GM12878 (cell line): ENCODE measurements at regions of chr12 and their contacts with region 1.

Region 1: GRCh38 chr12:121483949-121484348 is 84.0 kb downstream of the RNF34 start:
- DNase-seq: no peak
- ATAC-seq: no peak
- H3K4me3 ChIP-seq: no peak overlapping the region
- H3K27ac ChIP-seq: no peak overlapping the region
- H3K4me1 ChIP-seq: no peaks in the 10 kb centered on the region
- H3K27me3 ChIP-seq: no peaks in the 10 kb centered on the region
- CTCF ChIP-seq: no peak
- EP300 ChIP-seq: no peak
- POLR2A ChIP-seq: no peak
- RAD21 ChIP-seq: no peak

Region 2: DNA sequence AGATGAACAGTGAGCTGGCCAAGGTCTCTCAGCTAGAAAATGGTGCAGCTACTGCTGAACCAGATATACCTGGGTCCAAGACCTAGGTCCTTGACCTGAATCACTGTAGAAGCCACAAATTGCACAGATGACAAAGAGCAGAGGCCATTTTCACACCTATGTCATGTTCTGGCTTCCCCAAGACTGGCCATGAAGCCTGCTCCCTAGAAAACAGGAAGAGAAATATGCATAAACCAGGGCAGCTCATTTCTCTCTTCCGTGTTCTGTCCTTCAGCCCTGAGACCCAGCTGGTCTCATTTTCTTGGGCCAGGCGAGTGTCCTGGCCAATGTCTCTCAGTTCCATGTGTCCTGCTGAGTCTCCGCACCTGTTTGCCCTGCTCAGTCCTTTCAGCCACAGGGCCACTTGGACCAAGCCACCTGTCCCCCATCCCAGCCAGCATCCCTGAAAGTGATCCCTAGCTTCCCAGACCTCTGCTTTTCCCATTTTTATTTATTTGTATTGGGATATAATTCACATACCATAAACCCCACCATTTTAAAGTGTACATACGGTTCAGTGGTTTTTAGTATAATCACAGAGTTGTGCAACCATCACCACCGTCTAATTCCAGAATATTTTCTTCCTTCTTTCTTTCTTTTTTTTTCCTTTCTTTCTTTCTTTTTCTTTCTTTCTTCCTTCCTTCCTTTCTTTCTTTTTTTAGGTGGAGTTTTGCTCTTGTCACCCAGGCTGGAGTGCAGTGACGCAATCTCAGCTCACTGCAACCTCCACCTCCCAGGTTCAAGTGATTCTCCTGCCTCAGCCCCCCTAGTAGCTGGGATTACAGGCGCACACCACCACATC is 324.3 kb before region 1 on chr12:
- CTCF ChIA-PET with region 1: no interaction called
- POLR2A ChIA-PET with region 1: no interaction called
- RAD21 ChIA-PET with region 1: no interaction called
- SMC1A ChIA-PET with region 1: no interaction called
- in situ Hi-C with region 1: no loop called
- intact Hi-C with region 1: no loop called
- DNase-seq: peak; percentile 36
- ATAC-seq: peak; percentile 98
- H3K4me3 ChIP-seq: no peak overlapping the region
- H3K27ac ChIP-seq: no peak overlapping the region
- H3K4me1 ChIP-seq: peaks cover 3% of the 10 kb centered on the region; the same call in 1 of the 2 replicates
- H3K27me3 ChIP-seq: no peaks in the 10 kb centered on the region
- CTCF ChIP-seq: no peak
- EP300 ChIP-seq: peak; percentile 44 to 51; a peak in 2 of 4 replicates
- POLR2A ChIP-seq: no peak
- RAD21 ChIP-seq: no peak

Region 3: DNA sequence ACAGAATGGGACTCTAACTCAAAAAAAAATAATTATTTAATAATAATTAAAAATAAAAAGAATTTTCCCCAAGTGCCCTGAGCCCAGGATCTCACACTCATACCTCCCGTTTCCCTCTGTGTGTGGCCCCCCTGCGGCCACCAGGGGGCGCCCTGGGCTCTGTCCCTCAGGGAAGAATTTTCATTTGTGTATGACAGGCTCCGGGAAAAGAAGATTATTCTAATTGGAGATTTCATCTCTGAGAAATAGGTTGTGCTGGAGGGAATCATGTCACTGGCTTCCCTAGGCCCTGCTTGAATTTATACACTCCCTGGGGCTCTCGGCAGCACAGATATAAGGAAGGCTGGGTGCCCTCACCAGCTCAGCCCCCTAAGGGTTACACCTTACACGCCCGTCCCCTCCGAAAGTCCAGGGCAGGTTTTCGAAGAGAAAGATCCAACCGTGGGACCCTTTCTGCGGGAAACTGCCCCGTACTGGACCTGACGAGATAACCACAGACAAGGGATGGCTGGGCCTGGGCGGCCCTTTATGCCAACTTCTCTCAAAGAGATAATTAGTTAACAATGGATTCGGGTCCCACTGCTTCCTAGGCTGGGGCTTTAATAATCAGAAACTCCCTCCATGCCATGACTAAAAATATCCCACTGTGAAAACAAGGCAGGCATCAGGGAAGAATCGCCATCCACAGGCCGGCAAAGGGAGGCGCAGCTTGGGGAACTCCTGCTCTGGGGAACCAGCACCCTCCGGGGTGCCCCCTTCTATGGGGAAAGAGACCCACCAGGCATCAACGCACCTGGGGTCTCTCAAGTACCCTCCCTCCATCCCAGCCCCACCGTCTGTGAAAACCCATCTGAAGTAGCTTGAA is 16.2 kb after region 1 on chr12:
- CTCF ChIA-PET with region 1: interaction called, 11 read pairs
- POLR2A ChIA-PET with region 1: interaction called, 6 read pairs
- RAD21 ChIA-PET with region 1: no interaction called
- SMC1A ChIA-PET with region 1: interaction called, 5 read pairs
- in situ Hi-C with region 1: no loop called
- intact Hi-C with region 1: no loop called
- DNase-seq: no peak
- ATAC-seq: peak; percentile 94
- H3K4me3 ChIP-seq: no peak overlapping the region
- H3K27ac ChIP-seq: no peak overlapping the region
- H3K4me1 ChIP-seq: no peaks in the 10 kb centered on the region
- H3K27me3 ChIP-seq: no peaks in the 10 kb centered on the region
- CTCF ChIP-seq: peak; percentile 85 to 96 (median 91)
- EP300 ChIP-seq: no peak
- POLR2A ChIP-seq: no peak
- RAD21 ChIP-seq: peak; percentile 92

Region 4: DNA sequence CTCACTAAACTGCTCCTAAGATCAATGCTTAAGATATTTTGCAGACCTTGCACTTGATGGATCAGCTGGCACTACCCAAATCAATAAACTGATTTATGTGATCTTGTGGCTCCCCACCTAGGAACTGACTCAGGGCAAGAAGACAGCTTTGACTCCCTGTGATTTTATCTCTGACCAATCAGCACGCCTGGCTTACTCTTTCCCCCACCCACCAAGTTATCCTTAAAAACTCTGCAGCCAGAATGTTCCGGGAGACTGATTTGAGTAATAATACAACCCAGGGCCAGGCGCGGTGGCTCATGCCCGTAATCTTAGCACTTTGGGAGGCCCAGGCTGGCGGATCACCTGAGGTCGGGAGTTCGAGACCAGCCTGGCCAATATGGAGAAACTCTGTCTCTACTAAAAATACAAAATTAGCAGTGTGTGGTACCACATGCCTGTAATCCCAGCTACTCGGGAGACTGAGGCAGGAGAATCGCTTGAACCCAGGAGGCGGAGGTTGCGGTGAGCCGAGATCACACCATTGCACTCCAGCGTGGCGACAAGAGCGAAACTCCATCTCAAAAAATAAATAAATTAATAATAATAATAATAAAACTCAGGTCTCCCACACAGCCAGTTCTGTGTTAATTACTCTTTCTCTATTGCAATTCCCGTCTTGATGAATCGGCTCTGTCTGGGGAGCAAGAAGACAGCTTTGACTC is 173.5 kb after region 1 on chr12:
- CTCF ChIA-PET with region 1: no interaction called
- POLR2A ChIA-PET with region 1: no interaction called
- RAD21 ChIA-PET with region 1: no interaction called
- SMC1A ChIA-PET with region 1: no interaction called
- in situ Hi-C with region 1: no loop called
- intact Hi-C with region 1: no loop called
- DNase-seq: no peak
- ATAC-seq: no peak
- H3K4me3 ChIP-seq: no peak overlapping the region
- H3K27ac ChIP-seq: no peak overlapping the region
- H3K4me1 ChIP-seq: peaks cover 25% of the 10 kb centered on the region
- H3K27me3 ChIP-seq: no peaks in the 10 kb centered on the region
- CTCF ChIP-seq: no peak
- EP300 ChIP-seq: no peak
- POLR2A ChIP-seq: no peak
- RAD21 ChIP-seq: no peak

Region 5: GRCh38 chr12:121668750-121669520 is 185.0 kb after region 1 on chr12:
- CTCF ChIA-PET with region 1: interaction called, 13 read pairs
- POLR2A ChIA-PET with region 1: no interaction called
- RAD21 ChIA-PET with region 1: interaction called, 4 read pairs
- SMC1A ChIA-PET with region 1: interaction called, 4 read pairs
- in situ Hi-C with region 1: no loop called
- intact Hi-C with region 1: no loop called
- DNase-seq: no peak
- ATAC-seq: no peak
- H3K4me3 ChIP-seq: no peak overlapping the region
- H3K27ac ChIP-seq: no peak overlapping the region
- H3K4me1 ChIP-seq: peaks cover 15% of the 10 kb centered on the region
- H3K27me3 ChIP-seq: no peaks in the 10 kb centered on the region
- CTCF ChIP-seq: peak; percentile 58 to 71 (median 59)
- EP300 ChIP-seq: no peak
- POLR2A ChIP-seq: no peak
- RAD21 ChIP-seq: peak; percentile 73

Region 6: GRCh38 chr12:121678716-121679580 is 195.0 kb after region 1 on chr12:
- CTCF ChIA-PET with region 1: interaction called, 14 read pairs
- POLR2A ChIA-PET with region 1: no interaction called
- RAD21 ChIA-PET with region 1: no interaction called
- SMC1A ChIA-PET with region 1: no interaction called
- in situ Hi-C with region 1: no loop called
- intact Hi-C with region 1: no loop called
- DNase-seq: no peak
- ATAC-seq: no peak
- H3K4me3 ChIP-seq: no peak overlapping the region
- H3K27ac ChIP-seq: no peak overlapping the region
- H3K4me1 ChIP-seq: no peaks in the 10 kb centered on the region
- H3K27me3 ChIP-seq: no peaks in the 10 kb centered on the region
- CTCF ChIP-seq: no peak
- EP300 ChIP-seq: no peak
- POLR2A ChIP-seq: no peak
- RAD21 ChIP-seq: no peak